Activated CD4-positive, alpha-beta T cell treated with anti-CD3 and anti-CD28 coated beads, Interleukin-2, amount 10 ng/mL, durations not matched to agents 7 days and 5 days (primary cell): ENCODE measurements at regions of chr19 and their contacts with region 1.

Region 1: GRCh38 chr19:10580979-10581631 is 6.0 kb downstream of the AP1M2 start:
- DNase-seq: peak; percentile 93
- H3K4me3 Mint-ChIP-seq: no peak overlapping the region
- H3K27ac Mint-ChIP-seq: no peak overlapping the region
- H3K4me1 Mint-ChIP-seq: peaks cover 26% of the 10 kb centered on the region
- H3K27me3 Mint-ChIP-seq: no peaks in the 10 kb centered on the region

Region 2: DNA sequence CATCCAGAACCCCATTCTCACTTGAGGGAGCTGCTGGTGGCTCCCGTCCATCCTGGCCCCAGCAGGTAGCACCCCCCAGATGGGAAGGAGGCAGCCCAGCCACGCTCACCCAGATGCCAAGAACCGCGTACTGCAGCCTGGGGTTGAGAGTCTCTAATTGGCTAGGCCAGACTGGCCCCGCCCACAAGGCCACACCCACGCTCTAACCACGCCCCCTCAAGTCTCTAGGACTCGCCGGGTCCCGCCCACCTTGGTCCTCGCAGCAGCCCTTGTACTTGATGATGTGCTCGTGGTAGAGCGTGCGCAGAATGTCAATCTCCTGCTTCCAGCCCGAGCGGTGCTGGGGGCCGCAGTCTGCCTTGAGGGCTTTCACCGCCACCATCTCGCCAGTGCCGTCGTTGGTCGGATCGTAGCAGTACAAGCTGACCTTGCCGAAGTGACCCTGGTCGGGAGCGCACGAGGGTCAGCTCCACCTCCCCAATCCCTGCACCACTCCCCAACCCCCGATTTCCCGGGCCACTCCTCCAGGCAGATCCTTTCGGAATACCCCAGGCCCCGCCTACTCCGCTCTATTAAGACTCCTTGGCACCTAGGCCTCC is 227.2 kb before region 1 on chr19:
- CTCF ChIA-PET with region 1: no interaction called
- POLR2A ChIA-PET with region 1: no interaction called
- DNase-seq: peak; percentile 41
- H3K4me3 Mint-ChIP-seq: no peak overlapping the region
- H3K27ac Mint-ChIP-seq: peak overlapping the region; percentile 25
- H3K4me1 Mint-ChIP-seq: no peaks in the 10 kb centered on the region
- H3K27me3 Mint-ChIP-seq: no peaks in the 10 kb centered on the region

Region 3: DNA sequence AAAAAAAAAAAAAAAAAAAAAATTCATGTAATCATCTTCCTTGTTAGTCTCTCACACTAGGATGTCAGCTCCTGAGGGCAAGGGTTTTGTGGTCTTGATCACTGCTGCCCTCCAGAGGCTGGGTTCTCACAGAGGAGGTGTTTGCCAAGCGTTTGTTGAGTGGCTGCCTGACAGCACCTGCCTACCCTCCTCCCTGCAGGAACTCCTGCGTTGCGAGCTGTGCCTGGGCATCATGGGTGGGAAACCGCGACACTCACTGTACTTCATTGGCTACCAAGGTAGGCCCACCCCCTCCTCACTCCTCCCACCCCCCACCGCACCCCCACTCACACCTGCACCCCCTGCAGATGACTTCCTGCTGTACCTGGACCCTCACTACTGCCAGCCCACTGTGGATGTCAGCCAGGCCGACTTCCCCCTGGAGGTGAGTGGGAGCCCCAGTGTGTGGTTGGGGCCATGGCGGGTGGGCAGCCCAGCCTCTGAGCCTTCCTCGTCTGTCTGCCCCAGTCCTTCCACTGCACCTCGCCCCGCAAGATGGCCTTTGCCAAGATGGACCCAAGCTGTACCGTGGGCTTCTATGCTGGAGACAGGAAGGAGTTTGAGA is 29.3 kb before region 1 on chr19:
- CTCF ChIA-PET with region 1: interaction called, 10 read pairs
- POLR2A ChIA-PET with region 1: no interaction called
- DNase-seq: peak; percentile 61
- H3K4me3 Mint-ChIP-seq: no peak overlapping the region
- H3K27ac Mint-ChIP-seq: peak overlapping the region; percentile 71
- H3K4me1 Mint-ChIP-seq: peaks cover 61% of the 10 kb centered on the region
- H3K27me3 Mint-ChIP-seq: no peaks in the 10 kb centered on the region

Region 4: DNA sequence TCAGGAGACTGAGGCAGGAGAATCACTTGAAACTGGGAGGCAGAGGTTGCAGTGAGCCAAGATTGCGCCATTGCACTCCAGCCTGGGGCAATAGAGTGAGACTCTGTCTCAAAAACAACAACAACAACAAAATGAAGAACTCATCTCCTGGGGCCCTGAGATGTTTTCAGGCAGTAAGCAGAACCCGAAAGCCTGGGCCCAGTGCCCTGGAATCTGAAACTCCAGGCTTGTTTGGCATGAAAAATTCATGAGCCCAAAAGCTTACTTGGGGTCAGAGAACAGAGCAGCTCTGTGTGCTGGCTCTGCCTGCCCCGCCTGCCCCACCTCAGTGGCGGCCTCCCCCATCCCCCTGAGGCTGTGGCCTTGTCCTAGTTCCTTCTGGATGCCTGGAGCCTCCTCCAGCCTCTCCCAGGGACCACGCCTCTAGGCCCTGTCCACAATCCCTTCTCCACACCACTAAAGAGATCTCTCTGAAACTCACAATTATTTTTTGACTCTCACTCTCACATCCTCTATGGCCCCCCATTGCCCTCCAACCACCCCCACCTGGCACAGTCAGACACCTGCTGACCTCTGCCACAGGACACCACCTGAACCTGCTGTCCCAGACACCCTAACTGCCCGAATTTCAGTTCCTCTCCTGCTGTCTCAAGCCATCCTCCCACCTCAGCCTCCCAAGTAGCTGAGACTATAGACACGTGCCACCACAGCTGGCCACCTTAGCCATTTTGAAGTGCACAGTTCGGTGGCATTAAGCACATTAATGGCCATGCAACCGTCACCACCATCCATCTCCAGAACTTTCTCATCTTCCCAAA is 12.9 kb after region 1 on chr19:
- CTCF ChIA-PET with region 1: interaction called, 23 read pairs
- POLR2A ChIA-PET with region 1: no interaction called
- DNase-seq: no peak
- H3K4me3 Mint-ChIP-seq: no peak overlapping the region
- H3K27ac Mint-ChIP-seq: peak overlapping the region; percentile 76
- H3K4me1 Mint-ChIP-seq: peaks cover 24% of the 10 kb centered on the region
- H3K27me3 Mint-ChIP-seq: no peaks in the 10 kb centered on the region

Region 5: GRCh38 chr19:10644260-10645007 is 63.3 kb after region 1 on chr19:
- CTCF ChIA-PET with region 1: interaction called, 100 read pairs
- POLR2A ChIA-PET with region 1: no interaction called
- DNase-seq: peak; percentile 87
- H3K4me3 Mint-ChIP-seq: no peak overlapping the region
- H3K27ac Mint-ChIP-seq: no peak overlapping the region
- H3K4me1 Mint-ChIP-seq: peaks cover 25% of the 10 kb centered on the region
- H3K27me3 Mint-ChIP-seq: no peaks in the 10 kb centered on the region

Region 6: DNA sequence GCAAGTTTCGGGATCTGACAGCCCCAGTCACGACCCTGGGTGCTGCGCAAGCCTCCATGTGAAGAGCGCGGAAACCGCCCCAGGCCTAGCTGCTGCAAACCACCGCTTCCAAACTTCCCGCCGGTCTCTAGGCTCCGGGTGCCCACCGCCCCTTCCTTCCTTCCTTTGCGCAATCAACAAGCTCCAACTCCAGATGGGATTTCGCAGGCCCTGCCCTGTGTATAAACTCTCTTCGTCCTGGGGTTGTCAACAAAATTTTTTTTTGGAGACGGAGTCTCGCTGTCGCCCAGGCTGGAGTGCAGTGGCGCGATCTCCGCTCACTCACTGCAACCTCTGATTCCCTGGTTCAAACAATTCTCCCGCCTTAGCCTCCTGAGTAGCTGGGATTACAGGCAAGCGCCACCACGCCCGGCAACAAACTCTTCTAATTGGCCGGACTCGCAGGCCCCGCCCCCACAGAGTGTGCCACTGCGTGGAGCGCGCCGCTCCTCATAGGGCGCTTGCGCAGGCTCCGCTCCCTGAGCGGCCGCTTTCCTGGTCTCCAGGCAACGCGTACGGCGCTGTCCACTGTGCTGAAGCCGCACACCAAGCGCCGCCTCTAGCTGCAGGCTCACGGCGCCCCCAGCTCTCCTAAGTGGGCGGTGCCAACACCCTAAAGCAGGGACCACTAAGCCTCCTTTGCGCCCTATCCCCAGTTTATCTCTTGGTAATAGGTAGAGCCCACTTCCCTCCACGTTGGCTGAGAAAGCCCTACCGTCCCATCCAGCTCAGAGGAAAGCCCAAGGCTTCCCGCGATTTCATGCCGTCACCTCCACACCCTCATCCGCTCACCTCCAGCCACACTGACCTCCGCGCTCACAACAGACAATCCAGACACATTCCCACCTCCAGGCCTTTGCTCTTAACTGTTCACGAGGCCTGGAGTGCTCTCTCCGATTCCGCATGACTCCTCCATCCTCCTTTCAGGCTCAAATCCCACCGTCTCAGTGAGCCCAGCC is 114.6 kb after region 1 on chr19:
- CTCF ChIA-PET with region 1: interaction called, 89 read pairs
- POLR2A ChIA-PET with region 1: no interaction called
- DNase-seq: peak; percentile 94
- H3K4me3 Mint-ChIP-seq: peak overlapping the region; percentile 72
- H3K27ac Mint-ChIP-seq: no peak overlapping the region
- H3K4me1 Mint-ChIP-seq: peaks cover 17% of the 10 kb centered on the region
- H3K27me3 Mint-ChIP-seq: peaks cover 15% of the 10 kb centered on the region